ENCODE measurements at regions of chr6 and their contacts with region 1.

Region 1: DNA sequence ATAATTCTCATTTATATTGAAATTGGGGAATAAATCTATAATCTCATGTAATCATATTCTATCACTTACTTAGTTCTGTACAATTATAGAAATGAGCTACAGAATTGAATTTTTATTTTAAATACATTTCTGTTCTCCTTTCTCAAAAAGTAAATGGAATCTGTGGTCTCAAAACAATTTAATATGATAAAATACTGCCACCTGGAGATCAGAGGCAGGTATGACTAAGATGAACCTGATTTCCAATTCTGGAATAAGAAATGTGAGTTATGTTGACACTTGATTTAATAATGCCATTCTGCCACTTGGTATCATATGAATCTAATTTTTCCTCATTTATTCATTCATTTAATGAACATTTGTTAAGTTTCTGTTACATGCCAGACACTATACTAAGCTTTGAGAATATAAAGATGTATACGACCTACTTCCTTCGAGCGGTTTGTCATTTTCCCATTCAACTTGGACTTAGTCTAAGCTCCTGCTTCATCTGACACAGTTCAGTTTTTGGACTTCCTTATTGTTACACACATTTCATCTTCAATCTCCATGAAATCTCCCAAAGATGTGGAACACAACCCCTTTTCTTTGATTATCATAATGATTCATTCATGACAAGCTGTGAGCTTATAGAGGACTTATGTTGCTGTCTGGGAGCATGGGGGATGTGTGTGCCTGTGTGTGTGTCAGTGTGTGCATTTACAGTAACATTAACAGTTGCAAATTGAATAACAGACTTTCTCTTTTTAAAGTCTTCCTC is 7.5 kb upstream of the CCDC28A start:
- DNase-seq: peak; percentile 48
- ATAC-seq: no peak
- H3K4me3 ChIP-seq: no peak overlapping the region
- H3K27ac ChIP-seq: no peak overlapping the region
- H3K4me1 ChIP-seq: peaks cover 3% of the 10 kb centered on the region
- H3K27me3 ChIP-seq: no peaks in the 10 kb centered on the region
- CTCF ChIP-seq: peak; percentile 73
- EP300 ChIP-seq: no peak
- POLR2A ChIP-seq: no peak
- RAD21 ChIP-seq: peak; percentile 66; the same call in 1 of the 2 replicates

Region 2: DNA sequence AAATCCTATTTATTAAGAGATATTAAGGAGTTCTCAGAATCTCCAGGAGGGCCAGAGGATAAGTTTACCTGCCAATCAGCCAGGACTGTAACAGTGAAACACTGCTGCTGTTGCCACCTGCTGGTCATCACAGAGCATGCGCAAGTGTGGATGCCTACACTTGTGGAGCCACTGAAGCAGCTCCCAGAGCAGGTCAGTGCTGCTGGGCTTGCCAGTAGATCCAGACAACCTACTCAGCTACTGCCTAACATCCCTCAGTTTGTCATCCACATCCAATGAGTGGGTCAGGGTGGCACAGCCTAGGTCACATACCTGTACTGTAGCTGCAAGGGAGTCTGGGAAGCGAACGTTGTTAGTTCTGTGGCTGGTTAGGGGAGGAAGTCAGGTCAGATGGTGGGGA is 248.4 kb before region 1 on chr6:
- CTCF ChIA-PET with region 1: no interaction called
- POLR2A ChIA-PET with region 1: no interaction called
- in situ Hi-C with region 1: no loop called
- intact Hi-C with region 1: loop called (anchors 5 kb)
- DNase-seq: peak; percentile 78
- ATAC-seq: peak; percentile 96
- H3K4me3 ChIP-seq: no peak overlapping the region
- H3K27ac ChIP-seq: no peak overlapping the region
- H3K4me1 ChIP-seq: peaks cover 32% of the 10 kb centered on the region
- H3K27me3 ChIP-seq: no peaks in the 10 kb centered on the region
- CTCF ChIP-seq: peak; percentile 88
- EP300 ChIP-seq: no peak
- POLR2A ChIP-seq: no peak
- RAD21 ChIP-seq: peak; percentile 83

Region 3: GRCh38 chr6:138692058-138692977 is 73.8 kb before region 1 on chr6:
- CTCF ChIA-PET with region 1: interaction called, 23 read pairs
- POLR2A ChIA-PET with region 1: no interaction called
- in situ Hi-C with region 1: loop called (anchors 5 kb)
- intact Hi-C with region 1: loop called (anchors 1 kb)
- DNase-seq: peak; percentile 30
- ATAC-seq: peak; percentile 77
- H3K4me3 ChIP-seq: peak overlapping the region; percentile 87 to 94 (median 90)
- H3K27ac ChIP-seq: peak overlapping the region; percentile 25
- H3K4me1 ChIP-seq: peaks cover 20% of the 10 kb centered on the region
- H3K27me3 ChIP-seq: peaks cover 0 to 13% of the 10 kb centered on the region in 2 experiments; a peak in 1 of 5 replicates
- CTCF ChIP-seq: peak; percentile 80
- EP300 ChIP-seq: 0 out of 4 replicates have a peak, but pooled peaks of 1 of the 2 experiments have one; percentile 15
- POLR2A ChIP-seq: no peak; a peak in 1 of 4 replicates
- RAD21 ChIP-seq: peak; percentile 83

Region 4: GRCh38 chr6:138795809-138796603 is 29.9 kb after region 1 on chr6 and contains the start of gene ECT2L:
- CTCF ChIA-PET with region 1: no interaction called
- POLR2A ChIA-PET with region 1: no interaction called
- in situ Hi-C with region 1: no loop called
- intact Hi-C with region 1: no loop called
- DNase-seq: no peak
- ATAC-seq: no peak; the same call in 2 of the 3 replicates
- H3K4me3 ChIP-seq: no peak within 1 kb of the TSS
- H3K27ac ChIP-seq: no peak within 1 kb of the TSS
- H3K4me1 ChIP-seq: no peaks in the 10 kb centered on the region
- H3K27me3 ChIP-seq: no peaks in the 10 kb centered on the region
- CTCF ChIP-seq: no peak
- EP300 ChIP-seq: no peak
- POLR2A ChIP-seq: no peak
- RAD21 ChIP-seq: no peak
- total RNA-seq, gene ECT2L: not detected in 2 replicates

Measured in HepG2 (cell line).